ENCODE measurements at regions of chr16 and their contacts with region 1.

Region 1: DNA sequence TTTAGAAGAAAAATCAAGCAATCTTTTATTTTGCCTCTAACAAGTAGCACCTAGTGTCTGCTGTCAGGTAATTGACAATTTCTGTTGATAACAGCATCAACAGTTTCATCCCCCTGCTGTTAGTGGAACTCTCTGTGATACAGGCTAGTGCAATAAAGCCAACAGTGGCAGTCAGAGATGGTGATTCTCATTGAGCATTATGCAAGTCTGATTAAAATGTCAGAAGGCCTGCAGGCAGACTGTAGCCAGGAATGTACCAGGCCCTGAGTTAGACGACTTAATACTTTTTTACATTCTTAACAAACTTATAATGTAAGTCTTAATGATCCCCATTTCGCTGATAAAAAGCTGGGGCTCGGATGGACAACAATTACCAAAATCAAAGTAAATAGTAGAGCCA is 14.6 kb downstream of the CYLD start:
- DNase-seq: no peak
- H3K4me3 Mint-ChIP-seq: no peak overlapping the region
- H3K27ac Mint-ChIP-seq: no peak overlapping the region
- H3K4me1 Mint-ChIP-seq: peaks cover 74% of the 10 kb centered on the region
- H3K27me3 Mint-ChIP-seq: no peaks in the 10 kb centered on the region

Region 2: GRCh38 chr16:50741808-50742575 is 14.5 kb before region 1 on chr16 and contains the start of gene CYLD:
- CTCF ChIA-PET with region 1: interaction called, 12 read pairs
- POLR2A ChIA-PET with region 1: interaction called, 3 read pairs
- DNase-seq: peak; percentile 100
- H3K4me3 Mint-ChIP-seq: peak within 1 kb of the TSS; percentile 95
- H3K27ac Mint-ChIP-seq: peak within 1 kb of the TSS; percentile 98
- H3K4me1 Mint-ChIP-seq: peaks cover 37% of the 10 kb centered on the region
- H3K27me3 Mint-ChIP-seq: no peaks in the 10 kb centered on the region
- total RNA-seq, gene CYLD: 200 to 222 TPM

Region 3: DNA sequence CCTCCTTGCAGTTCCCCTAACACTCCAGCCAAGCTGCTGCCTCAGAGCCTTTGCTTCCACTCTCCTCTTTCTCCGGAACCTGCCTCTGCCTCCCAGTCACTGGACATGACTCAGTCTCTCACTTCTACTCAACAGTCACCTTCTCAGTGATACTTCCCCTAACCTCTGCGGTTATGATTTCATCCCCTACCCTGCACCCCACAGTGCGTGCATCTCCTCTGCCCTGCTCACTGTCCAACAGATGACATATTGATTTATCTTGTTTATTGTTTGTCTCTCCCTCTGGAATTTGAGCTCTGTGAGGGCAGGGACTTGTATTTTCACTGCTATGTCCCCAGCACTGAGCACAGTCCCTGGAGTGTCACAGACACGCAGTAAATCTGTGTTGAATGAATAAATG is 86.1 kb after region 1 on chr16:
- CTCF ChIA-PET with region 1: no interaction called
- POLR2A ChIA-PET with region 1: no interaction called
- DNase-seq: no peak
- H3K4me3 Mint-ChIP-seq: no peak overlapping the region
- H3K27ac Mint-ChIP-seq: no peak overlapping the region
- H3K4me1 Mint-ChIP-seq: peaks cover 14% of the 10 kb centered on the region
- H3K27me3 Mint-ChIP-seq: peaks cover 24% of the 10 kb centered on the region